H1 (cell line): ENCODE measurements at regions of chr13 and their contacts with region 1.

Region 1: DNA sequence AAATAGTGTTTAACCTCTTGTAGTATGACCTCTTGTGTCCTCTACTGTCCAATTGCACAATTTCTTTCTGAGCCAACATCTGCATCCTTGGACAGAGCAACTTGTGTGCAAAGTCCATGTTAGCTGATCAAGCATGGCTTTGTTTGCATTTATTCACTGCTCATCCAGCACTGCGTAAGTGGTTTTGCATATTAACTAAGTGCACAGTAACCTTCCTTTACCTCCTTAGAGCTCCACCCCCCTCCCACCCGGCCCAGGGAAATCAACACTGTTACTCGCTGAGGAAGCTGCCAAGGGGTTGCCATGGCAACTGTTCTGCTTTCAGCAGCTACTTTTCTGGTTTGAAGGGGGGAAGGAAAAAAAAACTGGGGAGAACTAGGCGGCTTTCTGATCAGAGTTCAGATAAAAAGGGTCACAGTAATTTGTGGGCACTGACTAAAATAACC is 153.5 kb upstream of the KLF12 start:
- DNase-seq: peak in 1 of 2 experiments; percentile 49
- H3K4me3 ChIP-seq: peak overlapping the region in 1 of 4 experiments; percentile 29; a peak in 1 of 8 replicates
- H3K27ac ChIP-seq: no peak overlapping the region
- H3K4me1 ChIP-seq: peaks cover 8 to 20% (median 16%) of the 10 kb centered on the region in 4 experiments; a peak in 6 of 7 replicates
- H3K27me3 ChIP-seq: peaks cover 0 to 1% (median 0%) of the 10 kb centered on the region in 4 experiments; a peak in 1 of 7 replicates
- CTCF ChIP-seq: no peak
- EP300 ChIP-seq: no peak
- POLR2A ChIP-seq: no peak
- RAD21 ChIP-seq: no peak

Region 2: DNA sequence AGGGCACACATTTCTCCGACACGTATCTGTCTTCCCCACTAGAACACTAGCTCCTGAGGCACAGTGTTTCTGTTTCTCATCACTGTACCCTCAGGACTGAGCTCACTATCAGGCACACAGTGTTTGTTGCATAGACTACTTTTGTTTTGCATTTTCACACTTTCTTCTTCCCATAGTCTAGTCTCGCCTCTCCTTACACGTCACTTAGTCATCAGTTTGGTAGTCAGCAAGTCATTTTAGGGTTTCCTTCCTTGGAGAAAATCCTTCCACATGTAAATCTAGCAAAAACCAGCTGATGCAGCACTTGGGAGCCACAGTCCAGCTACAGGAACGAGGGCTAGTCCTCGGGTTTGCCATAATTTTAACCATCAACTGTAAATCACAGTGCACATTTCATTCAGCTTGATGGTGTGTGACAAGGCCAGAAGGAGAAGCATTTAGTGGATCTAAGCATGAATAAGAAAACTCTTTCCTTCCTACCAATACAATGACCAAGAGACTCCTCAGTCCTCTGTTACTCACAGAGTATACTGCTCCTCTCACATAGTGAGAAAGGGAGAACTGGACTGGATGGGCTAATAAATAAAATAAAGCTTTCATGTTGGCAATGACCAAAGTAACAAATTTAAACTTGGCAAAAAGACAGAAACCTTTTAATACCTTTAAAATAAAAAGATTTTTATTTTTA is 374.6 kb before region 1 on chr13:
- CTCF ChIA-PET with region 1: interaction called, 10 read pairs
- POLR2A ChIA-PET with region 1: no interaction called
- DNase-seq: no peak
- H3K4me3 ChIP-seq: no peak overlapping the region
- H3K27ac ChIP-seq: no peak overlapping the region
- H3K4me1 ChIP-seq: peaks cover 0 to 6% (median 3%) of the 10 kb centered on the region in 4 experiments; a peak in 3 of 7 replicates
- H3K27me3 ChIP-seq: no peaks in the 10 kb centered on the region
- CTCF ChIP-seq: no peak
- EP300 ChIP-seq: no peak
- POLR2A ChIP-seq: no peak
- RAD21 ChIP-seq: no peak

Region 3: DNA sequence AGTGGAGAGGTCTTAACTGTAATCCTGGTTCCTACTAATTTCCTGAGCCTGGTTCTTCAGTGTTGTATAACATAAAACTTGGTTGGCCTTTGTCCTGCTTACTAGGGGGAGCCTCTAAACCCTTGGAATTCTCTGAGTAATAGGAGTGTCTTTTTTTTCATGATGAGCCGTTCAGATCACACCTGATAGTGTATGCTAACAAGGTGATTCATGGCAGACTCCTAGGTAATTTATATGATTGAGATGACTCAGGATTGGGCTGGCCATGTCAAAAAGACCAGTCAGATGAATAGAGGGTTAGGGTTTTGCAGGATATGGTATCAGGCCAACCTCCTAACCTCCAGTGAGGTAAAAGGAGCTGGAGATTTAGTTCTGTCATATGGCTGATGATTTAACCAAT is 17.7 kb before region 1 on chr13:
- CTCF ChIA-PET with region 1: interaction called, 10 read pairs
- POLR2A ChIA-PET with region 1: no interaction called
- DNase-seq: no peak
- H3K4me3 ChIP-seq: no peak overlapping the region
- H3K27ac ChIP-seq: no peak overlapping the region
- H3K4me1 ChIP-seq: no peaks in the 10 kb centered on the region
- H3K27me3 ChIP-seq: no peaks in the 10 kb centered on the region
- CTCF ChIP-seq: no peak
- EP300 ChIP-seq: no peak
- POLR2A ChIP-seq: no peak
- RAD21 ChIP-seq: no peak

Region 4: DNA sequence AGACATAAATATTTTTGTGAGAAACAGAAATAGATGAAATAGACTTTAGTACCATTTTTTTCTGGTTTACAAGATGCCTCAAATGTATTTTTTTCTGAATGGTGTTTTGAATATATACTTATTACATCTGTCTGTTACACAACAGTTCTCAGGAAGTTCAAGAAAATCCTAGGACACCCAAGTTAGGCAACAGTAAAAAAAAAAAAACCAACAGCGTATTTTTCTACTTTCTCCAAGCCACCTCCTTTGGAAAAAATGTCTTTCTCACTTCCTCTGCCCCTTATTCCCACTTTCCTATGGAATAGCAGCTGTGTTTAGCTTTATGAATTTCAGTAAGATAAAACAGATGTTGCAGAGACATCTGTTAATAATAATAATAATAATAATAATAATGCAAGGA is 336.0 kb after region 1 on chr13:
- CTCF ChIA-PET with region 1: no interaction called
- POLR2A ChIA-PET with region 1: no interaction called
- DNase-seq: no peak
- H3K4me3 ChIP-seq: no peak overlapping the region
- H3K27ac ChIP-seq: no peak overlapping the region
- H3K4me1 ChIP-seq: peaks cover 0 to 3% (median 0%) of the 10 kb centered on the region in 4 experiments; a peak in 2 of 7 replicates
- H3K27me3 ChIP-seq: no peaks in the 10 kb centered on the region
- CTCF ChIP-seq: no peak
- EP300 ChIP-seq: no peak
- POLR2A ChIP-seq: no peak
- RAD21 ChIP-seq: no peak